ENCODE measurements at regions of chr3 and their contacts with region 1.

Region 1: GRCh38 chr3:179811321-179812095 is 158.7 kb downstream of the USP13 start:
- DNase-seq: peak; percentile 71
- H3K4me3 ChIP-seq: no peak overlapping the region
- CTCF ChIP-seq: peak; percentile 72

Region 2: DNA sequence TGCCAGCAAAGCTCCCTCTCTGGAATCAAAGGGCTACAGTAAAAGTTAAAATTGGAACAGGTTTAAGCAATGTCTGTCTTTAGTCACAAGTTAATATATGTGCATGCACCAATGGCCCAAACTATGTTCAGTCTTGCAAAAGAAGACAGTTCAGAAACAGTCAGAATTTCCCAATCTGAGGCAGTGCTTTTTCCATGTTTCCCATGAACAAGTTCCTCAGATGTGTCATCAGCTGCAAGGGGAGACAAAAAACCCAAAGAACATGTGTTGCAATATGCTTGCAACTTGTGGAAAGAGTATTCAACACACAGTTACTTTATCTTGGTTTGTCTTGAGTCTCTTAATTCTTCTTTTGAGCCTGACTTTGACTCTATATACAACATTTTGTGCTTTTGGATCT is 10.2 kb before region 1 on chr3:
- CTCF ChIA-PET with region 1: interaction called, 10 read pairs
- POLR2A ChIA-PET with region 1: no interaction called
- DNase-seq: peak; percentile 95
- H3K4me3 ChIP-seq: no peak overlapping the region
- CTCF ChIP-seq: no peak

Region 3: DNA sequence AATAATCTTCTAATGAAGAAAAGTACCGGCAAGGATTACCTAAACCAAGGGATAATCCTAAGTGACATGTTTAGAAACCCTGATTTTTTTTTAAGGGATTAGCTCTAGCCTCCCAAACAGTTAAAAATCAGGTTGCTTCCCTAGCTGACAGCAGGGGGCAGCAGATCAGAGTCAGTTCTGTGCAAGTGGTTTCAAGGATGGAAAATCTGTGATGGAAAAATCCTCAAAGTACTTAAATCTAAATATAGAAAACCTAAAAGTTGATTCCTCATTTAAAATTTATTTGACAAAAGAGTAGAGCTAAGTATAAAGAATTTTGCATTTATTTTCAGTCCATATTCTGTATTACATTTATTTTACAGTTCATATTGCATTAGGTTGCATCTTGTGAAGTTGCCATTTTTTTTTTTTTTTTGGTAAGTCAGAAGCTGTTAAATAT is 117.6 kb after region 1 on chr3:
- CTCF ChIA-PET with region 1: interaction called, 19 read pairs
- POLR2A ChIA-PET with region 1: no interaction called
- DNase-seq: peak; percentile 31
- H3K4me3 ChIP-seq: no peak overlapping the region
- CTCF ChIP-seq: peak; percentile 69

Region 4: GRCh38 chr3:180594631-180595558 is 783.4 kb after region 1 on chr3:
- CTCF ChIA-PET with region 1: interaction called, 28 read pairs
- POLR2A ChIA-PET with region 1: no interaction called
- DNase-seq: peak; percentile 26
- H3K4me3 ChIP-seq: no peak overlapping the region
- CTCF ChIP-seq: peak; percentile 47

Region 5: DNA sequence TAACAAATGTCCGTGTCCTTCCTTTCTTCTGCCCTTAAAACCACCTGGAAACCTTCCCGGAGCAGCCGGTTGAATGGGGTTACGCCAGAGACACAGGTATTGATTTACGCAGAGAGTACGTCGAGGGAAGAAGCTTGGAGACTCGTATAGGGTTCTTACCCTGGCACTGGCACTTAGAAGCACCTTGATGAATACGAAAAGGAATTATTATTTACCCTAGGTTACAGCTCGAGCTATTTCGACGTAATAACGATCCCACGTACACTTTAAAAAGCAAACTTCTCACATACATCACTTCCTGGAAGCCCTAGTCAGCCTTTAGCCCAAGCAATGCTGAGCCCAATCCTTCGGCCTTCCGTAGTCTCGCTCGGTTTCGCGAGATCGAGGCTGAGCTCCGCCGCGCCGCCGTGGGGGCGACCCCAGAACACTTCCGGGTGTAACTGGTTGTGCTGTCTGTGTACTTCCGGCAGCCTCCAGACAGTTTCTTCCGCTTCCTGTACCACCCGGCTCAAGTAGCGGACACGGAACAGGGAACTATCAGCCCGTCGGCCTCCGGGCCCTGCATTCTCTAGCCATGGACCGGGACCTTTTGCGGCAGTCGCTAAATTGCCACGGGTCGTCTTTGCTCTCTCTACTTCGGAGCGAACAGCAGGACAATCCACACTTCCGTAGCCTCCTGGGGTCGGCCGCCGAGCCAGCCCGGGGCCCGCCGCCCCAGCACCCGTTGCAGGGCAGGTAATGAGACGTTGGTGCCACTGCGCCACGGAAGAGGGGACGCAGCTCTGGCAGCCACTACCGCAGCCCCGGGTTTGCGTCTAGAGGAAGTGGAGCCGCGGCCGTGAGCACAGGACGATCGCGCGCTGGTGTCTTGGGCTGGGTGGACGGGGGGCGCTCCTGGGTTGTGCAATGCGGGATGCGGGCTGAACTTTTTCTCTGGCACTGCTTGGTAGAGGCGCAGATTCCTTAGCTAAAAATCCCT is 790.5 kb after region 1 on chr3 and contains the start of gene TTC14:
- CTCF ChIA-PET with region 1: interaction called, 28 read pairs
- POLR2A ChIA-PET with region 1: interaction called, 7 read pairs
- DNase-seq: peak; percentile 63
- H3K4me3 ChIP-seq: peak within 1 kb of the TSS; percentile 86
- CTCF ChIP-seq: no peak